Mammary epithelial cell (primary cell): ENCODE measurements at regions of chr7 and their contacts with region 1.

Region 1: GRCh38 chr7:120950539-120951308 is at the start of gene ING3:
- DNase-seq: peak; percentile 96
- H3K4me3 ChIP-seq: peak within 1 kb of the TSS; percentile 55 to 86 (median 79)
- H3K27ac ChIP-seq: peak within 1 kb of the TSS; percentile 84
- H3K4me1 ChIP-seq: peaks cover 12% of the 10 kb centered on the region
- H3K27me3 ChIP-seq: no peaks in the 10 kb centered on the region
- CTCF ChIP-seq: no peak
- total RNA-seq, gene ING3: 11.7 TPM

Region 2: GRCh38 chr7:120402079-120402767 is 548.5 kb before region 1 on chr7:
- CTCF ChIA-PET with region 1: no interaction called
- dilution Hi-C with region 1: no loop called
- in situ Hi-C with region 1: no loop called
- intact Hi-C with region 1: loop called (anchors 5 kb)
- DNase-seq: peak; percentile 74
- H3K4me3 ChIP-seq: peak overlapping the region in 1 of 3 experiments; percentile 37
- H3K27ac ChIP-seq: peak overlapping the region; percentile 4
- H3K4me1 ChIP-seq: peaks cover 11% of the 10 kb centered on the region
- H3K27me3 ChIP-seq: no peaks in the 10 kb centered on the region
- CTCF ChIP-seq: no peak

Region 3: DNA sequence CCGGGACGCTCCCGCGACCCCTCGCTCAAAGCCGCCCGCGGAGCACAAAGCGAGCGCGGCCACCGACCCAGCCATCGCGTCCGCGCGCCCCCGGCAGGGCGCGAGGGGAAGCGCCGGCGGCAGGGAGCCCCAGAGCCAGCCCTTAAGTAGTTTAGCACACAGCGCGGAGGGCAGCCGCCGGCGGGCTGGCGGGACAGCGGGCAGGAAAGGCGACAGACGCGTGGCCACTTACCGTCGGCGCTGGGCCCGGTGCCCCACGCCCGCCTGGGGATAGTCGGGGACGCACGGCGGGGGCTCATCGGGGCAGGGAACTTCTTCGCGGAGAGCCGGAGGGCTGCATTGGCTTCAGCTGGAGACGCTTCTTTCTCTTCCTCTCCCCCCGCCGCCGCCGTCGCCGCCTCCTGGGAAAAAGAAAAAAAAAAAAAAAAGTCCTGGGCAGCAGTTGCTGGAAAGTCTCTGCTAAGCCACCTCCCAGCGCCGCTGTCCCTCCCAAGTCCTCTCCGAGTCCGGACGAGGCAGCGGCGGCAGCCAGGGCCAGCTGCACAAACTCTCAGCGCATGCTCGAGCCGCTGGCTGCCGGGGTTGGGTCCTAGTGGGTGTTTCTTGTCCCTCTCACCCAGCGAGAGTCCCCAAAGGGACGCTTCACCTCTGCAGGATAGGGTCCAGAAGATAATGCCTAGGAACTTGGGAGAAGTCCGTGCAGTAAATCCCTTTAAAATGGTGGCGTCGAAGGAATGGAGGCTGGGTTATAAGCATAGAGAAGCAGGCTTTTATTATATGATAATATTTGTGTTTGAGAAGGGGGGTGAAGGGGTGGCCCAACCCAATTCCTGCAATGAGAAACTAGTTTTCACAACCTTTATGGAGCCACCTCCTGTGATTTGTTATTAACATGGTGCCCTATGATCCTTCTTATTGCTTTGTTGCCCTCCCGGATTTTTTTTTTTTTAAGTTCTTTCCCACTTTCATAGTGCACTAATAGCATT is 92.8 kb before region 1 on chr7 and contains the start of gene TSPAN12:
- CTCF ChIA-PET with region 1: no interaction called
- dilution Hi-C with region 1: no loop called
- in situ Hi-C with region 1: no loop called
- intact Hi-C with region 1: loop called (anchors 5 kb)
- DNase-seq: peak; percentile 48
- H3K4me3 ChIP-seq: peak within 1 kb of the TSS; percentile 61 to 79 (median 69)
- H3K27ac ChIP-seq: no peak within 1 kb of the TSS
- H3K4me1 ChIP-seq: peaks cover 10% of the 10 kb centered on the region
- H3K27me3 ChIP-seq: peaks cover 4% of the 10 kb centered on the region
- CTCF ChIP-seq: peak; percentile 23 to 50
- total RNA-seq, gene TSPAN12: 1.2 to 3.2 TPM

Region 4: GRCh38 chr7:121163699-121164098 is 213.0 kb after region 1 on chr7:
- CTCF ChIA-PET with region 1: no interaction called
- dilution Hi-C with region 1: no loop called
- in situ Hi-C with region 1: no loop called
- intact Hi-C with region 1: no loop called
- DNase-seq: no peak
- H3K4me3 ChIP-seq: no peak overlapping the region
- H3K27ac ChIP-seq: no peak overlapping the region
- H3K4me1 ChIP-seq: no peaks in the 10 kb centered on the region
- H3K27me3 ChIP-seq: no peaks in the 10 kb centered on the region
- CTCF ChIP-seq: no peak